ENCODE measurements at regions of chr5 and their contacts with region 1.

Region 1: GRCh38 chr5:74648835-74649293 is 8.3 kb upstream of the ENC1 start:
- DNase-seq: no peak
- ATAC-seq: peak; percentile 92 to 95 (median 94)
- H3K4me3 ChIP-seq: no peak overlapping the region
- H3K27ac ChIP-seq: no peak overlapping the region
- H3K4me1 ChIP-seq: no peaks in the 10 kb centered on the region
- H3K27me3 ChIP-seq: no peaks in the 10 kb centered on the region
- CTCF ChIP-seq: peak; percentile 73 to 85 (median 78)
- POLR2A ChIP-seq: no peak

Region 2: DNA sequence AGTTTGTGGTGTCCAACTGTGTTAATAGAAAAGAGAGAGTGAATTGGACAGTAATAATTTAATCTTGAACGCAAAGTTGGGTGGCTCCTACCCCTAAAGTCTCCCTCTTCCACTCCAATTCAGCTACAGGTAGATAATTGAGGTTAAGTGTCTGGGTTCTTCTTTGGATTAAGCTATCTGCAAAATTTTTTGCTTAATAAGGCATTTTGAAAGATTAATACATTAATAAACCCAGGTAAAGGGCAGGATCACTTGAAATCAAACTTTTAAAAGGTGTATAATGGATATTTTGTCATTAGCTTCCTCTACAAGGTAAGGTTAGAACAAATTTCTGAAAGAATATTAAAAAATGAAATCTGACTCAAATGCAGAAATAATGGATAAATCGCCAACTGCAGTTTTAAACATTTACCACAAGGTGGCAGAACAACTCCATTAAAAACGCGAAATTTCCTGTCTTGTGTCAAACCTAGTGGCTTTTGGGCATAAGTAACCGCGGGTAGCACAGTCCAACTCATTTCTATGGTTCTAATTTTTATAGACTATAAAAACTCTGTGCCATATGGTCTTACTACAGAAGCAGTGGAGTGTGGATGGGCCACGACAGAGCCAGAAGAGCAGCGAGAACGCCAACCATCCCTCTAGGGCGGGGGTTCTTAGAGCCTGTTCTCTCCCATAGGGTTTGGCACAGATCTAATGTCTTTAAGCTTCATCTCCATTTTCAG is 746.4 kb before region 1 on chr5:
- intact Hi-C with region 1: loop called (anchors 5 to 10 kb)
- DNase-seq: no peak
- ATAC-seq: peak; percentile 58 to 72 (median 61)
- H3K4me3 ChIP-seq: no peak overlapping the region
- H3K27ac ChIP-seq: peak overlapping the region; percentile 3 to 52 (median 39)
- H3K4me1 ChIP-seq: peaks cover 0 to 24% (median 8%) of the 10 kb centered on the region in 4 donors
- H3K27me3 ChIP-seq: no peaks in the 10 kb centered on the region
- CTCF ChIP-seq: peak; percentile 81 to 97 (median 84)
- POLR2A ChIP-seq: no peak

Region 3: DNA sequence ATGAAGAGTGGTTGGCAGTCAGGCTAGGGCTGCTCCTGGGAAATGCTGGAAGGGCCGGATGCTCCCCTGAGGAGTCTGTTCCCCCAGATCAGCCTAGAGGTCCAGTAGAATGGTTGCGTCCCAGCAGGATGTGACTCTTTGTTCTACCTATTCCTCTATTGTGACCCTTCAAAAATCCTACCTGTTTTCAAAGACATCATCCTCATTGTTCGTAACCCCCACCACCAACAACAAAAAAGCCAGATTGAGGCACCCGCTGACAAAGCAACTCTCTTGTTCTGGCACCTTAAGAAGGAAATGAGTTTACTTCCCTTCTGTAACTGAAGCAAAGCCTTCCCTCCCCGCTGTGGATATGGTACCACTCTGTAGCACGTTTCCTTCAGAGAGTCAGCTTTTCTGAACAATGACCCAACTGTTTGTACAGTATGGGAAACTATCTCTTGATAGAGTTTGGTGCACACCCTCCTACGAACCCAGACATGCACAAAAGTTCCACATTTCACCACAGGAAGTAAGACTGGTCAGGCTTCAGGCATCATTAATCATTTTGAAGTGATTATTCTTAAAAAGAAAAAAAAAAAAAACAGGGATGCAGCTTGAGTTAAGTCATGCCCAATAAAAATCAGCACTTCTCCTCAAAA is 215.5 kb before region 1 on chr5:
- intact Hi-C with region 1: no loop called
- DNase-seq: no peak
- ATAC-seq: peak; percentile 60 to 81 (median 71)
- H3K4me3 ChIP-seq: no peak overlapping the region
- H3K27ac ChIP-seq: no peak overlapping the region
- H3K4me1 ChIP-seq: peaks cover 0 to 11% (median 0%) of the 10 kb centered on the region in 4 donors
- H3K27me3 ChIP-seq: no peaks in the 10 kb centered on the region
- CTCF ChIP-seq: no peak
- POLR2A ChIP-seq: no peak